ENCODE measurements at regions of chr7 and their contacts with region 1.

Region 1: GRCh38 chr7:27130540-27131389 is at the start of gene HOXA4:
- DNase-seq: peak; percentile 82
- H3K4me3 ChIP-seq: peak within 1 kb of the TSS; percentile 6 to 37; a peak in 2 of 4 replicates
- H3K27ac ChIP-seq: no peak within 1 kb of the TSS
- H3K4me1 ChIP-seq: peaks cover 0 to 4% of the 10 kb centered on the region in 2 experiments; a peak in 1 of 4 replicates
- H3K27me3 ChIP-seq: peaks cover 88% of the 10 kb centered on the region
- CTCF ChIP-seq: no peak
- EP300 ChIP-seq: no peak
- RAD21 ChIP-seq: no peak
- polyA plus RNA-seq, gene HOXA4: not detected in 2 replicates

Region 2: DNA sequence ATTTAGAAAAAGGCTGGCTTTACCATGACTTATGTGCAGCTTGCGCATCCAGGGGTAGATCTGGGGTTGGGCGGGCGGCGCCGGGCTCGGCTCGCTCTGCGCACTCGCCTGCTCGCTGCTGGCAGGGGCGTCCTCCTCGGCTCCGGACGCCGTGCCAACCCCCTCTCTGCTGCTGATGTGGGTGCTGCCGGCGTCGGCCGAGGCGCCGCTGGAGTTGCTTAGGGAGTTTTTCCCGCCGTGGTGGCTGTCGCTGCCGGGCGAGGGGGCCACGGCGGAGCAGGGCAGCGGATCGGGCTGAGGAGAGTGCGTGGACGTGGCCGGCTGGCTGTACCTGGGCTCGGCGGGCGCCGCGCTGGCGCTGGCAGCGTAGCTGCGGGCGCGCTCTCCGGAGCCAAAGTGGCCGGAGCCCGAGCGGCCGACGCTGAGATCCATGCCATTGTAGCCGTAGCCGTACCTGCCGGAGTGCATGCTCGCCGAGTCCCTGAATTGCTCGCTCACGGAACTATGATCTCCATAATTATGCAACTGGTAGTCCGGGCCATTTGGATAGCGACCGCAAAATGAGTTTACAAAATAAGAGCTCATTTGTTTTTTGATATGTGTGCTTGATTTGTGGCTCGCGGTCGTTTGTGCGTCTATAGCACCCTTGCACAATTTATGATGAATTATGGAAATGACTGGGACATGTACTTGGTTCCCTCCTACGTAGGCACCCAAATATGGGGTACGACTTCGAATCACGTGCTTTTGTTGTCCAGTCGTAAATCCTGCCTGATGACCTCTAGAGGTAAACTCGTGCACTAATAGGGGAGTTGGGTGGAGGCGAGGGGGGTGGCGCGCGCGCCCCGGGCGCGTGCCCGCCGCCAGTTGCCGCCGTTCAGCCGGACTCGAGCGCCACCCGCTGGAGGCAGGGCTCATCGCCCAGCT is 12.5 kb after region 1 on chr7 and contains the start of gene HOXA5:
- CTCF ChIA-PET with region 1: interaction called, 36 read pairs
- POLR2A ChIA-PET with region 1: interaction called, 3 read pairs
- DNase-seq: peak; percentile 92
- H3K4me3 ChIP-seq: peak within 1 kb of the TSS; percentile 17 to 31; a peak in 2 of 4 replicates
- H3K27ac ChIP-seq: no peak within 1 kb of the TSS
- H3K4me1 ChIP-seq: peaks cover 11 to 12% of the 10 kb centered on the region in 2 experiments; a peak in 1 of 4 replicates
- H3K27me3 ChIP-seq: peaks cover 100% of the 10 kb centered on the region
- CTCF ChIP-seq: peak; percentile 85
- EP300 ChIP-seq: no peak
- RAD21 ChIP-seq: peak; percentile 63
- polyA plus RNA-seq, gene HOXA5: not detected in 2 replicates

Region 3: GRCh38 chr7:27160546-27161213 is 29.9 kb after region 1 on chr7:
- CTCF ChIA-PET with region 1: interaction called, 18 read pairs
- POLR2A ChIA-PET with region 1: no interaction called
- DNase-seq: peak; percentile 96
- H3K4me3 ChIP-seq: peak overlapping the region; percentile 39 to 70
- H3K27ac ChIP-seq: no peak overlapping the region
- H3K4me1 ChIP-seq: peaks cover 0 to 8% of the 10 kb centered on the region in 2 experiments; a peak in 1 of 4 replicates
- H3K27me3 ChIP-seq: peaks cover 91% of the 10 kb centered on the region
- CTCF ChIP-seq: peak; percentile 99
- EP300 ChIP-seq: no peak
- RAD21 ChIP-seq: peak; percentile 94

Region 4: GRCh38 chr7:27277619-27278018 is 146.9 kb after region 1 on chr7:
- CTCF ChIA-PET with region 1: no interaction called
- POLR2A ChIA-PET with region 1: no interaction called
- DNase-seq: no peak
- H3K4me3 ChIP-seq: no peak overlapping the region
- H3K27ac ChIP-seq: no peak overlapping the region
- H3K4me1 ChIP-seq: no peaks in the 10 kb centered on the region
- H3K27me3 ChIP-seq: peaks cover 18% of the 10 kb centered on the region
- CTCF ChIP-seq: no peak
- EP300 ChIP-seq: no peak
- RAD21 ChIP-seq: no peak

Measured in SK-N-SH (cell line).